Ascending aorta (tissue), 2 donors: ENCODE measurements at regions of chr16 and their contacts with region 1.

Region 1: DNA sequence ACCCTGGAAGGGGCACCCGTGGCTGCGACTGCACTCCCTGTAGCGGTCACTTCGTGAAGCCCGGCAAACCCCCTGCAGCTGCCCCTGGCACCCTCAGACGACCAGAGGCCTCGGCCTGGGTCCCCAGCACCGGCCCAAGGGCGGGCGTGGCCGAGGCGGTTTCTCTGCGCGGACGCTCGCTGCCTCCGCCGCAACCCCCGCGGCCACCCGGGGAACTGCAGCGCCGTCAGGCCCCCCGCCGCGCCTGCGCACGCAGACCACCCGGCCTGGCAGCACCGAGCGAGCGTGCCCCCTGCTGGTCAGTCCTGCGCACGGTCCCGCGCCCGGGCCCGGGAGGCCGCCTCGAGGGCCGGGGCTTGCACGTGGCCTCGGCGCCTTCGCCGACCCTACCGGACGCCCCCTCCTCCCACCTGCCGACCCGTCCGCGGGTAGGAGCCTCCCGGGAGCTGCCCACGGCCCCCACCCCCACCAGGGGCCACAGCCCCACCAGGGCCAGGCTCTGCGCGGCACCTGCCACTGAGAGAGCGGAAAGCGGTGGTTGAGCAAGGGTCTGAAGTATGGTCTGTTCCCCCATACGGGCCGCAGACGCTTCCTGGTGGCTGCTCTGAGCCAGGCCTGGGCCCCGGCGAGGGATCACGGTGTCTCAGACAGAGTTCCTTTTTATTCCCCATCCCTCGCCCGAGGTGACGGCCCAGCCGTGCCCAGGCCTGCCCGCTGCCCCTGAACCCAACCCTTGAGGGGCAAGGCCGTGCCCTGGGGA is 11.5 kb upstream of the HS3ST6 start:
- DNase-seq: peak; percentile 18 to 92
- H3K4me3 ChIP-seq: peak overlapping the region; percentile 64 to 75
- H3K27ac ChIP-seq: peak overlapping the region in 1 of 2 donors; percentile 70
- H3K4me1 ChIP-seq: peaks cover 4 to 6% of the 10 kb centered on the region in 2 donors
- H3K27me3 ChIP-seq: no peaks in the 10 kb centered on the region
- CTCF ChIP-seq: peak; percentile 70 to 100 (median 94)

Region 2: GRCh38 chr16:1863681-1864460 is 65.9 kb before region 1 on chr16:
- intact Hi-C with region 1: loop called (anchors 2 kb)
- DNase-seq: no peak
- H3K4me3 ChIP-seq: no peak overlapping the region
- H3K27ac ChIP-seq: no peak overlapping the region
- H3K4me1 ChIP-seq: no peaks in the 10 kb centered on the region
- H3K27me3 ChIP-seq: no peaks in the 10 kb centered on the region
- CTCF ChIP-seq: peak; percentile 31 to 54 (median 39)

Region 3: GRCh38 chr16:1942810-1943726 is 13.3 kb after region 1 on chr16 and contains the start of gene MSRB1:
- intact Hi-C with region 1: loop called (anchors 2 kb)
- DNase-seq: peak; percentile 99 to 100
- H3K4me3 ChIP-seq: peak within 1 kb of the TSS; percentile 70 to 92
- H3K27ac ChIP-seq: peak within 1 kb of the TSS; percentile 78 to 81
- H3K4me1 ChIP-seq: peaks cover 10 to 11% of the 10 kb centered on the region in 2 donors
- H3K27me3 ChIP-seq: no peaks in the 10 kb centered on the region
- CTCF ChIP-seq: no peak
- total RNA-seq, gene MSRB1: 32.9 TPM